Ovary (tissue), 10 donors: ENCODE measurements at regions of chr16 and their contacts with region 1.

Region 1: DNA sequence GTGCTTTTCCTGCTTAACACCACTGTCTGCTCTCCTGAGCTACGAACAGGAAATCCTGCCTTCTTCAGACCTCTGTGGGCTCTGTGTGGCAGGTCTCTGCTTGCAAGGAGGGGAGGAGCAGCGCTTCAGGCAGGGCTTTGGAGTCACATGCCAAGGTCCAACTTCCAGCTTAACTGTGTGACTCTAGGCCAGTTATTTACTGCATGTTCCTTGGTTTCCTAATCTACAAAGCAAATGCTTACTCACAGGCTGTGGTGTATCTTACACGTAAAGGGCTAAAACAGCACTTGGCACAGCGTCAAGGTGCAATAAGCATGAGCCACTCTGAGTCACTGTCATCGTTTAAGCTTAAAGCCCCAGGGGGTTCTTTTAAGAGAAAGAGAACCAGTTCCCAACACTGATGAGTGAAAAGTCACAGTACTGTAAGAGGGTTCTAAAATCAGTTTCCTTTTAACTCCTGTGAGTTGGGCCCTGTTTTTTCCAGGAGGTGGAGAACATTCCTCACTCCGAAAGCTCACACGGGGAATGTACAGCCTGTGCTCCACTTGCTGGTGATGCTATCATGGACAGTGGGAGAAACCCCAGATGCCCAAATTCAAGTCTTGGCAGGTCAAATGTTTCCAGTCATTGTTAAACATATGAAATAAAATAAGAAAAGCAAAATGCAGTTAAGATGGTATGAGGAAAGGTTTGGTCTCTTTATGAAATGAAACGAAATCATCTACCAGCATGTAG is 54.1 kb upstream of the BCAR1 start:
- DNase-seq: peak; percentile 58 to 86 (median 73)
- H3K4me3 ChIP-seq: no peak overlapping the region
- H3K27ac ChIP-seq: peak overlapping the region in 1 of 2 donors; percentile 73
- H3K4me1 ChIP-seq: peaks cover 2% of the 10 kb centered on the region
- H3K27me3 ChIP-seq: no peaks in the 10 kb centered on the region
- CTCF ChIP-seq: no peak
- EP300 ChIP-seq: peak; percentile 25
- POLR2A ChIP-seq: no peak

Region 2: DNA sequence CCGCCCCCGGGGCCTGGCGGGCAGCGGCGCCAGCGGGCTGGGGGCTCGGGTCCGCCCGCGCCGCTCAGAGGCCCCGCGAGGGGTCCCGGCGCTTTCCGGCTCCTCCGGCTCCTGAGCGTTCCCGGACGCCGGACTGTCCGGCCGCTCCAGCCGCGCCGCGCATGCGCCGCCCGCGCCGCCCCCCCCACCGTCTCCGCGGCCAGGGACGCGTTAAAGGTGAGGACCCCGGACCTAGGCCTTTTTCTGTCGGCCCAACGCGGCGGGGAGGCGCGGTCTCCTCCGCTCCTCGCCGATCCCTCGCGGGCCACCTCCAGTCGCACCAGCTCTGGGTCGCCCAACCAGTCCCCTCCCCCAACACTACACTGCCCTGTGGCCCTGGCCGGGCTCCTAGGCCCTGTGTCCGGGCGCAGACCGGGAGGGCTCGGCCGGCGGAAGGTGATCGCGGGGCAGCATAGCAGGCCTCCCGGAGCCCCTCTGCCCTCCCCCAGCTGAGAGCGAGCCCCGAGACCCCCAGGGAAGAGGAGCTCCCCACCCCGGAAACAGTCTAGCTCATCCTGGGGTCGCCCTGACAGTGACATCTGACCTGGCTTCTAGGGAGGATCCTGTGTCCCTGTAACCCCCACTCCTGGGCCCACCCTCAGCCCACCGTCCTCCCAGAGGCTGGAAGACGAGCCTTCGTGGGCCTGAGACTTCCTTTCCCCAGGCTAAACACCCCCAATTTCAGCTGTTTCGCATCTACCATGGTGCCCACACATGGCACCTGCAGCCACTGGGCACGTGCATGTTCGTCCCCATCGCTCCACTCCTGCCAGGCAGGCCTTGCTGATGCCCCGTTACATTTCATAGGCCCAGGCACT is 39.5 kb before region 1 on chr16:
- intact Hi-C with region 1: loop called in 1 of 4 experiments (anchors 5 kb)
- DNase-seq: peak; percentile 74 to 90 (median 84)
- H3K4me3 ChIP-seq: peak overlapping the region; percentile 65
- H3K27ac ChIP-seq: peak overlapping the region; percentile 78 to 84
- H3K4me1 ChIP-seq: peaks cover 37% of the 10 kb centered on the region
- H3K27me3 ChIP-seq: no peaks in the 10 kb centered on the region
- CTCF ChIP-seq: no peak
- EP300 ChIP-seq: no peak
- POLR2A ChIP-seq: peak; percentile 64